Naive thymus-derived CD4-positive, alpha-beta T cell (primary cell): ENCODE measurements at regions of chr7 and their contacts with region 1.

Region 1: DNA sequence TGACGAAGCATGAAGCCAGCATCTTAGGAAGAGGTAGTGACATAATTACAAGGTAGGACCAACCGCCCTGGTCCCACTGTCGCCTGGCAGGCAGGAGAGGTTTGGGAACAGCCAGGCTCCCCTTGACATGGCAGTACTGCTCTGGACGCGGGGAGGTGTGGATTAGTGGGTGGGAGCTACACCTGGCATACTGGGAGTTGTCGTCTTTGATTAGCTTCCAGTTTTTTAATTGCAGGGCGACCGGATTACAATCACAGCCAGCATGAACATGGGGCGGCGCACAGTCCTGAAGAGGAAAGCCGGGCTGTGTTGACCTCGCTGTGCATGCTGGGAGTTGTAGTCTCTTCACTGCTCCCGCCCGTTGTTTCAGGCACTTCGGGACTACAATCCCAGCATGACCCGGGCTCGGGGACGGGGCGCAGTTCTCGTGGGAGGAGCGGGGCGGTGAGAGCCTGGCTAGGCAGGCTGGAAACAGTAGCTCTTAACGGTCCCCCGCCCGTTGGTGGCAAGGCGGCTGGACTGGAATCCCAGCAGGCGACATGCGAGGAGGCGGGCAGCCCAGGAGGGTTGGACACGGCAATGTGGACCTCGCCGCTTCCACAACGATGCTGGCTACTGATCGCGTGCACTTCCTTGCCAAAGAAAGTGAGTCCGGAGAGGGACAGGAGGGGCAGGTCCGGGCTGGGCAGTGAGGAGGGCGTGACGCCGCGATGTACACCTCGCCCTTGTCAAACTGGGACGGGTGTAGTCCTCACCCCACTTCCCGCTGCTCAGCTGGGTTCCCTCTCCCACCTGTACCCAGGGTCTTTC is 98.0 kb upstream of the ZNF722 start:
- DNase-seq: peak; percentile 64 to 95 (median 91)
- ATAC-seq: peak; percentile 97
- H3K4me3 ChIP-seq: peak overlapping the region; percentile 84
- H3K4me3 Mint-ChIP-seq: peak overlapping the region; percentile 82 to 100 (median 98)
- H3K27ac ChIP-seq: peak overlapping the region; percentile 89
- H3K27ac Mint-ChIP-seq: peak overlapping the region; percentile 88 to 99 (median 95)
- H3K4me1 ChIP-seq: no peaks in the 10 kb centered on the region
- H3K4me1 Mint-ChIP-seq: peaks cover 0 to 22% (median 9%) of the 10 kb centered on the region in 7 donors
- H3K27me3 ChIP-seq: no peaks in the 10 kb centered on the region
- H3K27me3 Mint-ChIP-seq: peaks cover 0 to 4% (median 0%) of the 10 kb centered on the region in 5 donors

Region 2: GRCh38 chr7:64307254-64308015 is 406.8 kb after region 1 on chr7:
- CTCF ChIA-PET with region 1: no interaction called
- POLR2A ChIA-PET with region 1: interaction called, 9 read pairs
- intact Hi-C with region 1: loop called in 1 of 2 experiments (anchors 1 kb)
- DNase-seq: peak; percentile 76 to 95 (median 93)
- ATAC-seq: peak; percentile 99
- H3K4me3 ChIP-seq: peak overlapping the region; percentile 95
- H3K4me3 Mint-ChIP-seq: peak overlapping the region; percentile 90 to 100 (median 96)
- H3K27ac ChIP-seq: peak overlapping the region; percentile 83
- H3K27ac Mint-ChIP-seq: peak overlapping the region; percentile 94 to 99 (median 97)
- H3K4me1 ChIP-seq: peaks cover 0 to 13% of the 10 kb centered on the region in 2 donors
- H3K4me1 Mint-ChIP-seq: peaks cover 13 to 30% (median 19%) of the 10 kb centered on the region in 7 donors
- H3K27me3 ChIP-seq: no peaks in the 10 kb centered on the region
- H3K27me3 Mint-ChIP-seq: no peaks in the 10 kb centered on the region

Region 3: DNA sequence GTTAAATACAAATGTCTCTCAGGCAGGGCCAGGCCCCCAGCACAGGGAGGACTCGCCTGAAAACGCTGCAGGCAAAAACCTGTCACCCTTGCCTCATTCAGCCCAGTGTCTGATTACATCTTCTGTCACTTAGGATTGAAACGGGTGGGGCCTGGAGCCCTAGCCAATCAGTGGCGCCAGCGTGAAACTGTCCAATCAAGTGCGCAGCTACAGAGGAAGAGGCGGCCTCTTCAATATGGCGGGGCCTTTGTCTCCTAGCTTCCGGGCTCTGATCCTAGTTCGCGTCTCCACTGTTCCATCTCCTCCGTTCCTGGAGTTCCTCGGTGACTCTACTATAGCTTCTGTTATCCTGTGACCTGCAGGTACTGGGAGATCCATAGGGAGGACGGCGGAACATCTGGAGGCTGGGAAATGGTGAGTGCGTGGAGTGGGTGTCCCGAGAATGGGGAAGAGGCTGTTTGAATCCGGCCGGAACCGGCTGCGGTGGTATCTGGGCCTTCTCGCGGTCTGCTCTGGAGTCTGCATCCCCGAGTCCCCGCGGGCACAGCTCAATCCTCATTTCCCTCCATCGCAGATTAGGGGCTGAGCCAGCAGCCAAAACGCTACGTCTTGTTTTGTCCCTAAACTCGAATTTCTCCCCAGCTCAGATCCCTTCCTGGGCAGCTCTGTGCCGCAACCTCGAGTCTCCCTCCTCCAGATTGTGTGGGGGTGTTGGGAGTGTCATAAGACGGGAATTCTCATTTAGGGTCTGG is 413.3 kb after region 1 on chr7 and contains the start of gene ZNF736:
- CTCF ChIA-PET with region 1: no interaction called
- POLR2A ChIA-PET with region 1: interaction called, 3 read pairs
- intact Hi-C with region 1: loop called in 1 of 2 experiments (anchors 1 kb)
- DNase-seq: peak; percentile 64 to 92 (median 87)
- ATAC-seq: peak; percentile 100
- H3K4me3 ChIP-seq: peak within 1 kb of the TSS; percentile 81
- H3K4me3 Mint-ChIP-seq: peak within 1 kb of the TSS; percentile 90 to 100 (median 98)
- H3K27ac ChIP-seq: peak within 1 kb of the TSS; percentile 88
- H3K27ac Mint-ChIP-seq: peak within 1 kb of the TSS; percentile 88 to 100 (median 97)
- H3K4me1 ChIP-seq: peaks cover 8 to 12% of the 10 kb centered on the region in 2 donors
- H3K4me1 Mint-ChIP-seq: peaks cover 22 to 54% (median 39%) of the 10 kb centered on the region in 7 donors
- H3K27me3 ChIP-seq: no peaks in the 10 kb centered on the region
- H3K27me3 Mint-ChIP-seq: no peaks in the 10 kb centered on the region
- total RNA-seq, gene ZNF736: 22.8 to 54.2 (median 35.8) TPM

Region 4: GRCh38 chr7:65373608-65374351 is 1473.2 kb after region 1 on chr7 and contains the start of gene ZNF92:
- CTCF ChIA-PET with region 1: no interaction called
- POLR2A ChIA-PET with region 1: no interaction called
- intact Hi-C with region 1: loop called in 1 of 2 experiments (anchors 2 kb)
- DNase-seq: peak; percentile 84 to 95 (median 94)
- ATAC-seq: peak; percentile 99
- H3K4me3 ChIP-seq: peak within 1 kb of the TSS; percentile 87
- H3K4me3 Mint-ChIP-seq: peak within 1 kb of the TSS; percentile 90 to 98 (median 96)
- H3K27ac ChIP-seq: peak within 1 kb of the TSS; percentile 82
- H3K27ac Mint-ChIP-seq: peak within 1 kb of the TSS; percentile 87 to 96 (median 93)
- H3K4me1 ChIP-seq: peaks cover 8 to 21% of the 10 kb centered on the region in 2 donors
- H3K4me1 Mint-ChIP-seq: peaks cover 18 to 57% (median 49%) of the 10 kb centered on the region in 7 donors
- H3K27me3 ChIP-seq: no peaks in the 10 kb centered on the region
- H3K27me3 Mint-ChIP-seq: no peaks in the 10 kb centered on the region
- total RNA-seq, gene ZNF92: 16.3 to 22.5 (median 19.3) TPM